Right cardiac atrium (tissue), 5 donors: ENCODE measurements at regions of chr11 and their contacts with region 1.

Region 1: GRCh38 chr11:44727373-44728287 is 868 bp downstream of the TSPAN18 start:
- DNase-seq: peak; percentile 92 to 96 (median 96)
- ATAC-seq: peak; percentile 88
- H3K4me3 ChIP-seq: peak overlapping the region; percentile 62
- H3K27ac ChIP-seq: peak overlapping the region; percentile 85
- H3K4me1 ChIP-seq: peaks cover 14% of the 10 kb centered on the region
- H3K27me3 ChIP-seq: no peaks in the 10 kb centered on the region

Region 2: DNA sequence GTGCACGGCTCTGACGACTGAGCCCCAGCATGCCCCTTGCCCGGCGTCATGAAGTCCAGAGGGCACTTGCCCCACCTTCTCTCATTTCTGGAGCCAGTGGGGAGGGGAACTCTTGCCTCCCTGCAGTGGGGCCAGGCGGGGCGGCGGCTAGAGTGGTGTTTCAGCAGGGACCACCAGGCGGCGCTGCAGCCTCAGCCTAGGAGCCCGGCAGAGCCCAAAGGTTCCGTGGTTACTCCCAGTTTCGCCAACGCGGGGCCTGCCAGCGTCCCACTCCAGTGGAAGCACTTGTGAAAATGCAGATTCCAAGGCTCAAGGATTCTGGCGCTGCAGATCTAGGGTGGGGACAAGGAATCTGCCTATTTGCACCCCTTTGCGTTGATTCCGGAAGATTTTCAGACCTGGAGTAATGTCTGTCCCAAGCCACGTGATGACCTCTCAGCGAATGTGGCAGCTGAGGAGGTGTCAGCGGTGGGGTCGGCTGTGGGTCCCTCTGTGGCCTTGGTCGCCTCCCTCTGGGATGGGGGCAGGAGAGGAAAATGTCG is 106.4 kb before region 1 on chr11:
- intact Hi-C with region 1: loop called in 2 of 4 experiments (anchors 10 kb)
- DNase-seq: peak; percentile 82 to 92 (median 91)
- ATAC-seq: peak; percentile 77 to 81
- H3K4me3 ChIP-seq: no peak overlapping the region
- H3K27ac ChIP-seq: no peak overlapping the region
- H3K4me1 ChIP-seq: peaks cover 7% of the 10 kb centered on the region
- H3K27me3 ChIP-seq: no peaks in the 10 kb centered on the region

Region 3: GRCh38 chr11:44634401-44635281 is 93.0 kb before region 1 on chr11:
- intact Hi-C with region 1: loop called (anchors 5 to 10 kb)
- DNase-seq: peak; percentile 90 to 93 (median 92)
- ATAC-seq: peak; percentile 86 to 94
- H3K4me3 ChIP-seq: no peak overlapping the region
- H3K27ac ChIP-seq: no peak overlapping the region
- H3K4me1 ChIP-seq: peaks cover 13% of the 10 kb centered on the region
- H3K27me3 ChIP-seq: no peaks in the 10 kb centered on the region

Region 4: DNA sequence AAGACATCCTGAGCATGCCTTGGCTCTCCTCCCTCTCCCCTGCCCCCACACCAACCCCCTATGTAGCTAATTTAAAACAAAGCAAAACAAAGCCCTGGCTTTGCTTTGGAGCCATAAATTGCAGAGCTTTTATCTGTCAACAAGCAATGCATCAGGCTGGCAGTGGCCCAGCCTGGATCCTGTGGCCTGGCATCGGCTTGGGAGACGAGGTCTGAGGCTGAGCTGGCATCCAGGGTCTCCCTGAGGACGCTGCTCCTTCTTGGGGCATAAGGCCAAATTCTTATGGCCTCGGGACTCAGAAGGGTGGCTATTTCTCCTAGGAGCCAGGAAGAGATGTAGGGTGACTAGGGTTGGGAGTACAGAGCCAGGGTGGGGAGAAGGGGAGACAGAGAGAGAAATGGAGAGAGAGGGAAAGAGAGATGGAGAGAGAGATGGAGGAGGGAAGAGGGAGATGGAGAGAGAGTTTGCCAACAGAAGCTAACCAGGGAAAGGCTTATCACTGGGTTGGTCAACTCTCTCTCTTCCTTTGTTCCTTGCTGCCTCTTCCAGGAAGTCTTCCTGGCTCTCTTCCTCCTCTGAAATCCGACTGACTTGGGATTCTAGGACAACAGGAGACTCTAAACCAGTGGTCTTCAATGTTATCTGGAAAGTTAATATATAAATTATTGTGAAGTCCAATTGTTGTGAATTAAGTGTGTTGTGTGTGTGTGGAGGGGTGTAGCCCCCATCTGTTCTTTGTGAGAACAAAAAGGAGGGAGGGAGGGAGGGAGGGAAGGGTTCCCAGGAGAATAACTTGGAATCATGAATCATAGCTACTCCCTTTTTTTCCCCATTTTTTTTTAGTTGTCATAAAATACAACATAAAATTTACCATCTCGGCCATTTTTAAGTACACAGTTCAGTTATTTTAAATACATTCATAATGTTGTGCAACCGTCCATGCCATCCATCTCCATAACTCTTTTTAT is 28.2 kb after region 1 on chr11:
- intact Hi-C with region 1: no loop called
- DNase-seq: peak in 1 of 3 donors; percentile 62
- ATAC-seq: peak; percentile 15 to 20
- H3K4me3 ChIP-seq: no peak overlapping the region
- H3K27ac ChIP-seq: peak overlapping the region; percentile 18
- H3K4me1 ChIP-seq: peaks cover 16% of the 10 kb centered on the region
- H3K27me3 ChIP-seq: no peaks in the 10 kb centered on the region

Region 5: GRCh38 chr11:44775366-44775984 is 47.8 kb after region 1 on chr11:
- intact Hi-C with region 1: loop called (anchors 2 to 5 kb)
- DNase-seq: peak; percentile 64 to 76 (median 74)
- ATAC-seq: peak; percentile 25 to 55
- H3K4me3 ChIP-seq: no peak overlapping the region
- H3K27ac ChIP-seq: peak overlapping the region; percentile 11
- H3K4me1 ChIP-seq: peaks cover 30% of the 10 kb centered on the region
- H3K27me3 ChIP-seq: no peaks in the 10 kb centered on the region

Region 6: DNA sequence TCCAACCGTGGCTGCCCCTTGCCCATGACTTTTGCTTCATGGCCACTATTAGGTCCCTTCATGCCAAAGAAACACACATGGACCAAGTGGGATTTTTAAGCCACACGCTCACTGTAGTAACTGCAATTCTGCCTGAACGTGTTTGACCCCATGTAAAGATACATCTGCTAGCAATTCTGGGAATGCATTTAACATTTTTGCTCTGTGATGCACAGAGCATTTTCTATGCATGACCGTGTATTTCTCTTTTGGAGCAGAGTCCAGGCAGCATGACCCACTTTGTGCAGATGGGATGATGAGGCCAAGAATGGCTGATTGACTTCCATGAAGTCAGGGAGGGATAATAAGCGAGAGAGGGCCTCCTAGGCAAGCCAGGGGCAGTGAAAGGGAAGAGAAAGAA is 114.6 kb after region 1 on chr11:
- intact Hi-C with region 1: no loop called
- DNase-seq: no peak
- ATAC-seq: no peak
- H3K4me3 ChIP-seq: no peak overlapping the region
- H3K27ac ChIP-seq: no peak overlapping the region
- H3K4me1 ChIP-seq: peaks cover 3% of the 10 kb centered on the region
- H3K27me3 ChIP-seq: no peaks in the 10 kb centered on the region

Region 7: DNA sequence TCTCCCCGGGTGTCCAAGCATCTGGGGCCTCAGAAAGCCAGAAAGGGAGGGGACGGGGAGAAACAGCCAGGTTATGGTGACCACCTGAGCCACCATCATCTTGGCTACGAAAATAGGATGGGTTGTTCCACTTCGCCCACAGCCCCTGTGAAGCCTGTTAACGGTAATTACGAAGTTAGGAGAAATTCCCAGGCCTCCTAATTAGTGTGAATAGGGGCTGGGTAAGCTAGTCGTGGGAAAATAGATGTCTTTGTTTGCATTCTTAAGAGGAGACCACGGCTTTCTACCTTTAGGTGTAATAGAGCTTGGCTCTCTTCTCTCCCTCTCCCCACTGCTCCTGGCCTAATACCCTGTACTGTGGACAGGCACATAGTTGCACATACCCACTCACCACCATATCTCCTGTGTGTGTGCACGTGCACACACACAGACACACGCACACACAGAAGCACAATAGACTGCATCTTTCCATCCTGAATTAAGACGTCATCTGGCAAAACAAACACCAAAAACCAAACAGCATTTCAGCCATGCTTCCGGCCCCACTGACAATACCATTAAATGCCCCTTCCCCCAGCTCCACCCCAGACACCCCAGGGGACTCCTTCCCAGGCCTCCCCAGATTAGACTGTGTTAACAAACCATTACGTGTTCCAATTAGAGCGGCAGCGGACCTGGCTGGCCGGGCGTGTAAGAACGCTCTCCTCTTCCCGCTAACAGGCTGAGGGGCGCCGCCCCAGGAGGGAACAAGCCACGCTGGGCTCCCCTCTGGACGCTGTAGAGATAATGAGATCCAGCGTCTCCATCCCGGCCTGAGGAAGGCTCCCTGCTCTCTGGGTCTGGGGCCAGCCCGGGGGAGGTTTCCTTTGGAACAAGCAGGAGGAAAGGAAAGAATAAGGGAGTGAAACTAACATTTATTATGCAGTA is 150.2 kb after region 1 on chr11:
- intact Hi-C with region 1: no loop called
- DNase-seq: peak; percentile 58 to 75 (median 73)
- ATAC-seq: peak; percentile 13 to 71
- H3K4me3 ChIP-seq: no peak overlapping the region
- H3K27ac ChIP-seq: peak overlapping the region; percentile 25
- H3K4me1 ChIP-seq: peaks cover 5% of the 10 kb centered on the region
- H3K27me3 ChIP-seq: no peaks in the 10 kb centered on the region

Region 8: GRCh38 chr11:44893846-44894617 is 166.4 kb after region 1 on chr11:
- intact Hi-C with region 1: loop called (anchors 5 kb)
- DNase-seq: peak; percentile 80 to 90 (median 90)
- ATAC-seq: peak; percentile 85 to 92
- H3K4me3 ChIP-seq: no peak overlapping the region
- H3K27ac ChIP-seq: peak overlapping the region; percentile 73
- H3K4me1 ChIP-seq: peaks cover 10% of the 10 kb centered on the region
- H3K27me3 ChIP-seq: no peaks in the 10 kb centered on the region

Region 9: DNA sequence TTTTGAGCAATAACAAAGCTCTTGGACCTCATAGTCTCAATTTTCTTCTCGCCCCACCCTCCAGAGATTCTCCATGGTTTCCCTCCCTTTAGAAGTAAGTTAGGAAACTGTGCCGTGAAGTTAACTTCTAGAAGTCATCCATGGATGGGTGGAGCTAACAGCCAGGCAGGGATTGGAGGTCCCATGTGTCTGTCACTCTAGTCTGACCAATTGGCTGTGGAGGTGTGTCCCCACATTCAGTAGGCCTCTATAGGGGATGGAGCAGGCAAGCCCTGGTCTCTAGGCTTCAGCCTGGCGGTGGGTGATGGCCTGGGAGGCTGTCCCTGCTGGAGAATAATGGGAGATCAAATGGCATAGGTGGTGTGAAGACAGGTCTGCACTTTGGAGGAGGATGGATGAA is 172.3 kb after region 1 on chr11:
- intact Hi-C with region 1: loop called in 1 of 4 experiments (anchors 5 kb)
- DNase-seq: peak in 2 of 3 donors; percentile 32 to 48
- ATAC-seq: peak; percentile 42 to 64
- H3K4me3 ChIP-seq: no peak overlapping the region
- H3K27ac ChIP-seq: no peak overlapping the region
- H3K4me1 ChIP-seq: no peaks in the 10 kb centered on the region
- H3K27me3 ChIP-seq: no peaks in the 10 kb centered on the region

Region 10: GRCh38 chr11:44911029-44911814 is 183.6 kb after region 1 on chr11:
- intact Hi-C with region 1: loop called in 2 of 4 experiments (anchors 5 kb)
- DNase-seq: peak; percentile 85 to 91 (median 87)
- ATAC-seq: peak; percentile 78 to 83
- H3K4me3 ChIP-seq: no peak overlapping the region
- H3K27ac ChIP-seq: peak overlapping the region; percentile 33
- H3K4me1 ChIP-seq: peaks cover 2% of the 10 kb centered on the region
- H3K27me3 ChIP-seq: no peaks in the 10 kb centered on the region